ENCODE measurements at regions of chrX and their contacts with region 1.

Region 1: DNA sequence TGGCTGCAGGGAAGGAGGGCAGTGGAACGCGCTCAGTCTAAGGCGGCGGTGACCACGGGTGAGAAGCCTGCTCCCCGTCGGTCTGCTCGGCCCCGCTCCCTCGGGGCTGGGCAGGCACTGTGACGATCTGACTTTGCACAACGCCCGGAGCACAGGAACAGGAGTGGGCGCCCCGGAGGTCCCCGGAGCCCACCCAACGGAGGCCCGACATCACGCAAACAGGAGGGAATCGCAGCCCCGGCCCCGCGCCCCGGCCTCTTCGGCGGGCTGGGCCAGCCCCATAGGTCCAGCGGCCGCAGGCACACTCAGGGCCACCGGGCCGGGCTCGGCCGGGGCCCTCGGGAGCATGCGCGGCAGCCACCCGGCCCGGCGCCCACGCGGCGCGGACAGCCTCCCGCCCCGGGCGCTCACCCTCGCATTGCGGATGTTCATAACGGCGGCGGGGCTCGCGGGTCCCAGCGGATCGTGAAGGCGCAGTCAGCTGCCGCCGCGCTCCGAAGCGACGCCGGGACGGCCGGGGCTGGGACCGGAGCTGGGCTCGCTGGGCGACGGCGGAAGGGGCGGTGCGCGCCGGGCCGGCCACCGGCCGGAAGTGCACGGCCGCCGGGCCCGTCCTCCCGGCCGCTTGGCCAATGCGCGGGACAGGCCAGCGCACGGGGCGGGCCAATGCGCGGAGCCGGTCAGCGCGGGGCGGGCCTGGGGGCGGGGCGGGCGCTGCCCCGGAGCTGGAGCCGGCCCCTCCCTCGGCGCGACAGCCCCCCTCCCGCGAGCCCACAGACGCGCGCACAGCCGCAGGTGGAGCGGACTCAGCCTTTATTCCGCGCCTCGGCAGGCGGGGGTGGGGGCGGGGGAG is at the start of gene NAA10:
- DNase-seq: peak; percentile 75
- H3K4me3 ChIP-seq: peak within 1 kb of the TSS; percentile 87
- H3K27ac ChIP-seq: peak within 1 kb of the TSS; percentile 65
- H3K4me1 ChIP-seq: peaks cover 12% of the 10 kb centered on the region
- CTCF ChIP-seq: no peak
- total RNA-seq, gene NAA10: 77.5 and 82.7 TPM in 2 replicates

Region 2: GRCh38 chrX:153784325-153784967 is 150.3 kb before region 1 on chrX:
- CTCF ChIA-PET with region 1: interaction called, 13 read pairs
- POLR2A ChIA-PET with region 1: no interaction called
- intact Hi-C with region 1: no loop called
- DNase-seq: no peak
- H3K4me3 ChIP-seq: no peak overlapping the region
- H3K27ac ChIP-seq: no peak overlapping the region
- H3K4me1 ChIP-seq: peaks cover 3% of the 10 kb centered on the region
- CTCF ChIP-seq: no peak

Region 3: DNA sequence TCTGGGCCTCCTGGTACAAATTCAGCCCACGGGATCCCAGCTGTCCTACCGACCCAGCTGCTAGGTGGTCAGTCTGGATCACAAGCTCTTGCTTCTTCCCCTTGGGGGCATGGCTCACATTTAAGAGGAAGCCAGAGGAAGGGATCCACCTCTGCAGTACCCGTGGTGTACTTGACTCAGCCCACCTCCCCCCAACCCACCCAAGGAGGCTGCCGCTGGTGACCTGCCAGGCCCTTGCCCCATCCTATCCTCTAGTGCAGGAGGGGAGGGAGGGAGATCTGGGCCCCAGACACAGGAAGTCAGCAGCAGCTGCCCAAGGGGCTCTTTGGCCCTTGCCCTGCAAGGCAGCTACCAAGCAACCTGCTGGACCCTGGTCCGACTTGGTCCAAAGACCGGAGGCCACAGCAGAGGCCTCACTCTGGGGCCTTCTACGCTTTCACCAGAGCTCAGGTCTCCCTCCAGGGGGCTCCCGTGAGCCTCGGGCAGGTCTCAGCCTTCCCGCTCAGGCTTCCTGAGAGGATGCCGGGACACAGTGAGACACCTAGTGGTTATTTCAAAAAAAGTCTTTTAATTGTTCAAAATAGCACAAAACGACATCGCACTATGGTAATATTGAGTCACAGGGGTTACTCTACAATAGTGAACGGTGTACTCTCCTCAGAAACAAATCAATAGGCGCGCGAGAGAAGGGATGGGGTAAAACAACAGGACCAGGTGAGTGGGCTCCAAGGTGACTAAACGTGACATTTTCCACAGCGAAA is 12.5 kb after region 1 on chrX:
- CTCF ChIA-PET with region 1: no interaction called
- POLR2A ChIA-PET with region 1: no interaction called
- intact Hi-C with region 1: no loop called
- DNase-seq: peak; percentile 86
- H3K4me3 ChIP-seq: no peak overlapping the region
- H3K27ac ChIP-seq: no peak overlapping the region
- H3K4me1 ChIP-seq: peaks cover 16% of the 10 kb centered on the region
- CTCF ChIP-seq: peak; percentile 88